ENCODE measurements at regions of chr16 and their contacts with region 1.

Region 1: DNA sequence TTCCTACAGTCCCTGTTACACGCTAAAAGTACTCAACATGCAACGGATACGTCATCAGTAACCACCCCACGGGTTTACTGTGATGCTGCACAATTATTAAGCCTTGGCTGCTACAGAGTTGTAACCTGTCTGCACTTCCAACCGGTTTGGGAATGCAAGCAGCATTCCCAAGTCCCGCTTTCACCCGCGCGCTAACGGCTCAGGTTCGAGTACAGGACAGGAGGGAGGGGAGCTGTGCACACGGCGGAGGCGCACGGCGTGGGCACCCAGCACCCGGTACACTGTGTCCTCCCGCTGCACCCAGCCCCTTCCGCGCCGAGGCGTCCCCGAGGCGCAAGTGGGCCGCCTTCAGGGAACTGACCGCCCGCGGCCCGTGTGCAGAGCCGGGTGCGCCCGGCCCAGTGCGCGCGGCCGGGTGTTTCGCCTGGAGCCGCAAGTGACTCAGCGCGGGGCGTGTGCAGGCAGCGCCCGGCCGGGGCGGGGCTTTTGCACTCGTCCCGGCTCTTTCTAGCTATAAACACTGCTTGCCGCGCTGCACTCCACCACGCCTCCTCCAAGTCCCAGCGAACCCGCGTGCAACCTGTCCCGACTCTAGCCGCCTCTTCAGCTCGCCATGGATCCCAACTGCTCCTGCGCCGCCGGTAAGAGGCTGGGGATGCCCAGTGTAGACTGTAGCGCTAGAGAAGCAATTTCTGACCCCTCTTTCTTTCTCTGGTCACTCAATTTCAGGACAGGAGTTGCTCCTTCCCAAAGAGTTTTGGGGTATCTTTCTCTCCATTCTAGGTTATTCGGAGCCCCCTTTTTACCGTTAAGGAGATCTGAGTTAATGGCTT is at the start of gene MT2A:
- DNase-seq: peak; percentile 95
- H3K4me3 ChIP-seq: peak within 1 kb of the TSS; percentile 33 to 57
- H3K27ac ChIP-seq: peak within 1 kb of the TSS; percentile 86 to 90
- H3K4me1 ChIP-seq: peaks cover 22% of the 10 kb centered on the region
- H3K27me3 ChIP-seq: no peaks in the 10 kb centered on the region
- CTCF ChIP-seq: no peak
- POLR2A ChIP-seq: peak; percentile 77
- total RNA-seq, gene MT2A: 134 to 214 TPM

Region 2: GRCh38 chr16:56681939-56682702 is 73.9 kb after region 1 on chr16 and contains the start of gene MT1X:
- intact Hi-C with region 1: loop called (anchors 5 kb)
- DNase-seq: peak; percentile 96
- H3K4me3 ChIP-seq: peak within 1 kb of the TSS; percentile 46 to 47
- H3K27ac ChIP-seq: peak within 1 kb of the TSS; percentile 62 to 76
- H3K4me1 ChIP-seq: no peaks in the 10 kb centered on the region
- H3K27me3 ChIP-seq: no peaks in the 10 kb centered on the region
- CTCF ChIP-seq: no peak
- POLR2A ChIP-seq: peak; percentile 90
- total RNA-seq, gene MT1X: 268 to 697 TPM

Region 3: DNA sequence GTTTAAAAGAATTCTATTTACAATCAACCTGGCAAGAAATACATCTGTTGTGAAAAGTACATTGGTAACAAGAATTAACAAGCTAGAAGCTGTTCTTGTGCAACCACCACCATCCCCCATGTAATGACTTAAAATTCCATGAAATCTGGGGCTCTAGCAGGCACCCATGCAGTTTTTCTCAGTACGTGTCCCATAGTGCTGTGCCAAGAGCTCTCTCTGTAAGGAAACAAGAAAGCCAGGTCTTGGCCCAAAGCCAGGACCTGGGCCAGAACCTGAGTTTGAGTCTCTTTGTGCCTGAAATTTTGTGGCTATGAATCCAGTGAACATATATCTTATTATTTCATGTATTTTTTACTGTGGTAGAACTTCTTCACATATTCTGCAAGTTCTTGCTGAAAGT is 168.3 kb after region 1 on chr16:
- intact Hi-C with region 1: no loop called
- DNase-seq: peak; percentile 49
- H3K4me3 ChIP-seq: no peak overlapping the region
- H3K27ac ChIP-seq: no peak overlapping the region
- H3K4me1 ChIP-seq: peaks cover 32% of the 10 kb centered on the region
- H3K27me3 ChIP-seq: no peaks in the 10 kb centered on the region
- CTCF ChIP-seq: no peak
- POLR2A ChIP-seq: no peak

Region 4: GRCh38 chr16:56964243-56965148 is 356.2 kb after region 1 on chr16:
- intact Hi-C with region 1: no loop called
- DNase-seq: peak; percentile 54
- H3K4me3 ChIP-seq: no peak overlapping the region
- H3K27ac ChIP-seq: no peak overlapping the region
- H3K4me1 ChIP-seq: no peaks in the 10 kb centered on the region
- H3K27me3 ChIP-seq: no peaks in the 10 kb centered on the region
- CTCF ChIP-seq: peak; percentile 50 to 82 (median 70)
- POLR2A ChIP-seq: no peak